GM10248 (cell line): ENCODE measurements at regions of chr3 and their contacts with region 1.

Region 1: GRCh38 chr3:170572665-170573253 is 13.1 kb downstream of the SLC7A14 start:
- DNase-seq: peak; percentile 38
- CTCF ChIP-seq: no peak

Region 2: GRCh38 chr3:170585937-170586310 is 13.2 kb after region 1 on chr3 and contains the start of gene SLC7A14:
- CTCF ChIA-PET with region 1: interaction called, 14 read pairs
- POLR2A ChIA-PET with region 1: no interaction called
- DNase-seq: no peak
- CTCF ChIP-seq: no peak